PC-9 (cell line): ENCODE measurements at regions of chr6 and their contacts with region 1.

Region 1: DNA sequence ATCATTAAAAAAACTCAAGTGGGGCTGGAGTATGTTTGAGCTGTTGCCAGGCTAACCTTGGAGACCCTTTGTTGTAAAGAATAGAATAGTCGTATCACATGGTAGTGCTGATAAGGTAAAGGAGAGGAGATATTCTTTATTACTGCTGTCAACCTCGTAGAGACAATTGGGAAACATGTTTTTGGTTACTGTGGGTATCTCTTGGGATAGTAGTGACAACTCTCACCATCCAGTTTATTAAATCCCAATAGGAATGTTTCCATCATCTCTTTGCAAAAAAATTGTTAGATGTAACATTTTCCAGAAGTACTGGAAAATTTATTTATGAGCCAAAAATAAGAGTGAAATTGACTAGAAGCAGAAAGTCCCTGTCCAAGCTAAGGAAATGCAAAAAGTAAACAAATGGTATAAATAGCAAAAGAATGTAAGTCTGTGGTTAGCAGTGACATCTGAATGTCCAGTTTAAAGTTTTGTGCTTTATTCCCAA is 829.3 kb upstream of the CITED2 start:
- DNase-seq: no peak
- H3K4me3 ChIP-seq: no peak overlapping the region
- H3K27ac ChIP-seq: no peak overlapping the region
- H3K4me1 ChIP-seq: peaks cover 18% of the 10 kb centered on the region
- H3K27me3 ChIP-seq: no peaks in the 10 kb centered on the region
- CTCF ChIP-seq: no peak

Region 2: DNA sequence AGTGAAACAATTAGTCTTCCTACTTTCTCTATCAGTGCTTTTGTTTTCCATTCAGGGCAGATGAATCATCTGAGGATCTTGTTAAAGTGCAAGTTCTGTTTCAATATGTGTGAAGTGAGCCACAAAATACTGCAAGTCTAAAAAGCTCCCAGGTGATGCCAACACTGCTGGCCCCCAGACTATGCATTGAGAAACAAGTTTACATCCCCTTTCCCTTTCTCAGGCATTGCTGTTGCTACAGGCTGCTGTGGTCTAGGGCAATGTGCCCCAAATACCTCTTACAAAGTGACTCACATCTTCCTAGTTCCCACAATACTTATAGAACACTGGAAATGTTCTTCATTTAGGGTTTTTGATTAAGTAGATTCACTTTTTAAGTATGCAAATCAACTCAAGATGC is 1143.4 kb before region 1 on chr6:
- CTCF ChIA-PET with region 1: no interaction called
- POLR2A ChIA-PET with region 1: no interaction called
- intact Hi-C with region 1: no loop called
- DNase-seq: no peak
- H3K4me3 ChIP-seq: no peak overlapping the region
- H3K27ac ChIP-seq: no peak overlapping the region
- H3K4me1 ChIP-seq: no peaks in the 10 kb centered on the region
- H3K27me3 ChIP-seq: no peaks in the 10 kb centered on the region
- CTCF ChIP-seq: no peak

Region 3: DNA sequence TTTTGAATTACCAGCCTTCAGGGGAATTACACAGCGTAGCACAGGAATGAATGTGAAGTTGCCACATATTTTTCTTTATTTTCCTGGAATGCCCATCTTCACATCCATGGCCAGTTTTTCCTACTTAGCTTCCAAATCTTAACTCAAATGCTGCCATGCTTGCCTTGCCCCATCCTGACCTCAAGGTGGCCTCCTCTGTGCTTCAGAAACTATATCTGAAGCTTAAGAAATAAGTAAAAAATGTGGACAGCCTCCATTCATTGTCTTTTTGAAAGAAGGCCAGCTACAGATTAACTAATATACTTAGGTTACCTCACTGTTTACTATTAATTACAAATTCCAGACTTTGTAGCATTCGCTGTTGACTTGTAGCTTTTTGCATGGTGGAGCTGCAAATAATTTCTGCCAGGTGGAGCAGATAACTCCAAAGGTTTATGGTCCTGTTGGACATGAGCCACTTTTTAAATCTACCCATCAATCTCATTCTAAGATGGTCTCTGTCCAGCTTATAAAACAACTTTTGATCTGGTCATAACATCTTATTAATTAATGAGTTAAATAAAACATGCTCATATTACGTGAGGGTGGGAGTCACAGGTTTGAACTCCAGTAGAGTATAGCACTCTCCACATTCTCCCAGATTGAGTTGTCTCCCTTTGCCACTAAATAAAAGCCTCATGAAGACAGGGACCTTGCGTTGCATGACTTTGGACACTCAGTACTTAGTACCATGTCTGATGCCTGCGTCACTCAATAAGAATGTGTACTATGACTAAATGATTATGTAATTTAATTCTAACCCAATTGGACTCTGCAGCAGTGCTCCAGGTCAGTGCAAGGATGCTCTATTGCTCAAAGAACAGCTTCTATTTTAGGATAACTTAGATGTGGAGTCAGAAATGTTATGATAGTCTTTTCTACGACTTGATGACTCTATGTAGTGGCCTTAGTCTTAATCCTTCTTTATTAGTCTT is 150.7 kb before region 1 on chr6:
- CTCF ChIA-PET with region 1: interaction called, 17 read pairs
- POLR2A ChIA-PET with region 1: no interaction called
- intact Hi-C with region 1: no loop called
- DNase-seq: no peak
- H3K4me3 ChIP-seq: no peak overlapping the region
- H3K27ac ChIP-seq: no peak overlapping the region
- H3K4me1 ChIP-seq: peaks cover 12% of the 10 kb centered on the region
- H3K27me3 ChIP-seq: no peaks in the 10 kb centered on the region
- CTCF ChIP-seq: peak; percentile 55; the same call in 1 of the 2 replicates